Left ventricle myocardium superior (tissue), 1 donor: ENCODE measurements at regions of chr7 and their contacts with region 1.

Region 1: GRCh38 chr7:134432296-134433152 is 26.4 kb downstream of the AKR1B1 start:
- DNase-seq: peak; percentile 90
- ATAC-seq: peak; percentile 98

Region 2: DNA sequence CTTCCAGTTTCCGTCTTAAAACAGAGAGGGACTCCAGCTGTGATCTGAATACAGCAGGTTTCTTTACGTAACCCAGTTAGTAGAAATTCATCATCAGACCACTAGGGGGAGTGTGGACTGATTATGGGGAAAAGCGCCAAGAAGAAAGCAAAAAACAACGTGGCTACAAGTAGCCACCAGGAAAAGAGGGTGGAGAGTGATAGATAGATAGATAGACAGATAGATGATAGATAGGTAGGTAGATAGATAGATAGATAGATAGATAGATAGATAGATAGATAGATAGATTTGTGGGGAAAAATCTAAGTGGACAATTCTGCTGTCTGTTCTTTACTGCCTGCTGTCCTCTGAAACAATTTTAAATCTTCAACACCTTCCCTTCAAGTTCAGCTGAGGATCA is 82.1 kb after region 1 on chr7:
- intact Hi-C with region 1: loop called (anchors 2 kb)
- DNase-seq: no peak
- ATAC-seq: peak; percentile 56

Region 3: DNA sequence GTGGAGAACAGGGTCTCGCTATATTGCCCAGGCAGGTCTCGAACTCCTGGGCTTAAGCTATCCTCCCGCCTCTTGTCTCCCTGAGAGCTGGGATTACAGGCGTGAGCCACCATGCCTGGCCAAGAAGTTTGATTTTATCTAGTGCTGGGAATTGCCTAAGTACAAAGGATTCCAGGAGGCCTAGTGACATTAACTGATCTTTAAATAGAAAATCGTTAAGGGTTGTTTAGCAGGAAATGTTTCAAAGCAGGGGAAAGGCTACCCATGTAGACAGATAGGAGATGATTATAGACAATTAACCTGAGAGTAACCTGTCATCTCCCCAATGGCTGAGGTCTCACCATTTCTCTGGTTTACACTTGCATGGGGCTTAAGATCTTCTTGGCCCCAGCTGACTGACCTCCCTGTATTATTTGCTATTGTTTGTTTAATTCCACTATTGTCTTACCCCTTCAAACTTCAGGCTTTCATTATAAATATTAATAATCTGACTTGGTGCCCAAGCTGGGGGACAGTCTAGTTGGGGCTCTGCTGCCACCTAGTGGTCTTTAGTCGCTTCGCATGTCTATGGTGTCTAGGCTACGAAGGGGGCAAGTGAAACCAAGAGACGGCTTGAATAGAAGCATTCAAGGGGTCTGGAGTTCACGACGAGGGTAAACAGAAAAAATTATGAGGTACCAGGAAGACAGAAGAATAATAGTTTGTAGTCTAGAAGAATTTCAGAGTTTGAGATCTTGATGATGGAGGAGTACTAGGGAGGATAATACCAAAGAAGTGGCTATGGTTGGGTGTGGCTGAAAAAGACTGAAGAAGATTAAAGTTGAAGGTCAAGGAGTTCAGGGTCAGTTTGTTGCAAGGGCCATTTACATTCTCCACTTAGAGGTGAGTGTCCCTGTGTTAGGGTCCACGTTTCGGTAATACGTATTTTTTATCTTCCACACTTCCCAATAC is 173.7 kb after region 1 on chr7:
- intact Hi-C with region 1: loop called (anchors 5 kb)
- DNase-seq: peak; percentile 62
- ATAC-seq: peak; percentile 93